GM10248 (cell line): ENCODE measurements at regions of chr12 and their contacts with region 1.

Region 1: GRCh38 chr12:32671930-32672780 is 6.9 kb upstream of the DNM1L start:
- DNase-seq: peak; percentile 66
- CTCF ChIP-seq: peak; percentile 75

Region 2: DNA sequence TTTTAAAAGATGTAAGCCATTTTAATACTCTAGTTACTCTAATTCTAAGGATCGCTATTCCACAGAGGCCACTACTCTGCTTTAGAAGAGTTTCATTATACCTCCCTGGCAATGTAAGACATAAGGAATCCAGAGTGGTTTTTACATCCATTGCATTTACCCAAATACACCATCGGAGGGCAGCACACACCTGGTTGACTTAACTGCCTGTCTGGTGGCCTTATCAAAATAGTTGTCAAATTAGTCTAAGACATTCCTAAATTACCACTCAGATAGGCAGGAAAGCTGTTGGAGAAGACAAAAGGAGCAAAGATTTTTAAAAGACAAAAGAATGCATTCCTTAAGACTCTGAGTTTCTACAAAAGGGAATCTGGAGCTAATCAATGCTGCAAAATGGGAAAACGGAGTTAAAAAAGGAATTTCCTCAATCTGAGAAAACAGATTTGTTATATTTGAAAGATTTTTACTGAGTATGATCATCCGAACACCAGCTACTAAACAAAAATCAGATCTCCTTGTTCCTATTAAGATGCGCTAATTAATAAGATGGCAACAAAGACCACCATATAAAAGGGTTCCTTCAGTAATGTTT is 306.6 kb before region 1 on chr12:
- CTCF ChIA-PET with region 1: interaction called, 23 read pairs
- POLR2A ChIA-PET with region 1: no interaction called
- DNase-seq: peak; percentile 64
- CTCF ChIP-seq: peak; percentile 74

Region 3: GRCh38 chr12:32455607-32456071 is 216.5 kb before region 1 on chr12:
- CTCF ChIA-PET with region 1: interaction called, 49 read pairs
- POLR2A ChIA-PET with region 1: no interaction called
- DNase-seq: peak; percentile 46
- CTCF ChIP-seq: peak; percentile 54

Region 4: GRCh38 chr12:32659908-32660440 is 12.2 kb before region 1 on chr12:
- CTCF ChIA-PET with region 1: interaction called, 26 read pairs
- POLR2A ChIA-PET with region 1: no interaction called
- DNase-seq: no peak
- CTCF ChIP-seq: no peak

Region 5: GRCh38 chr12:32688786-32689185 is 16.6 kb after region 1 on chr12:
- CTCF ChIA-PET with region 1: interaction called, 18 read pairs
- POLR2A ChIA-PET with region 1: no interaction called
- DNase-seq: no peak
- CTCF ChIP-seq: no peak